Aorta (tissue), 5 donors: ENCODE measurements at regions of chr22 and their contacts with region 1.

Region 1: DNA sequence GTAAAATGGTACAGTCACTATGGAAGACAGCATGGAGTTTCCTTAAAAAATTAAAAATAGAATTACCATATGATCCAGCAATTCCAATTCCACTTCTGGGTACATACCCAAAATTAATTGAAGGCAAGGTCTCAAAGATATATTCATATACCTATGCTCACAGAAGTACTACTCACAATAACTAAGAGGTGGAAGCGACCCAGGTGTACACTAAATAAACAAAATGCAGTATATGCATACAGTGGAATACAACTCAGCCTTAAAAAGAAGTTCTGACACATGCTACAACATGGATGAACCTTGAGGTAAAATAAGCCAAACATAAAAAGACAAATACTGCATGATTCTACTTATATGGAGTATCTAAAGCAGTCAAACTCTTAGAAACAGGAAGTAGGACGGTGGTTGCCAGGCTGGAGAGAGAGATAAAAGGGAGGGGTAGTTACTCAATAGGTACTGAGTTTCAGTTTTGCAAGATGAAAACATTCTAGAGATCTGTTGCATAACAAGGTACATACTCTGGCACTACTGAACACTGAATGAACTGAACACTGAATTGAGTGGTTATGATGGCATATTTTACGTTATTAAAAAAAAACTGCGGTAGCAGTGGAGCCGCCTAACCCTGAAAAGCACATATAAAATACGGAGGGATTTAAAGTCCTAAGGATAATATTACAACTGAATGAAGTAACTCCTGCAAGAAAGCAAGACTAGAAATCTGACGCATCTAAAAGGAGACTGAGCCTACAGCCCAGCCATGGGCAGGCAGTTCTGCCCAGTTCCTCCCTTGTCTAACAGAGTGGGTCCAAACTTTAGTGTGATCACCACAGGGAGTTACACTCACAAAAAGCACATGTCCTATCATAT is 12.8 kb downstream of the DGCR2 start:
- DNase-seq: peak in 1 of 2 donors; percentile 26
- ATAC-seq: peak; percentile 50
- H3K4me3 ChIP-seq: no peak overlapping the region
- H3K27ac ChIP-seq: no peak overlapping the region
- H3K4me1 ChIP-seq: peaks cover 0 to under 1% of the 10 kb centered on the region in 2 donors
- H3K27me3 ChIP-seq: no peaks in the 10 kb centered on the region

Region 2: GRCh38 chr22:19058713-19059451 is 50.6 kb before region 1 on chr22:
- intact Hi-C with region 1: loop called in 1 of 2 experiments (anchors 10 kb)
- DNase-seq: no peak
- ATAC-seq: no peak
- H3K4me3 ChIP-seq: no peak overlapping the region
- H3K27ac ChIP-seq: no peak overlapping the region
- H3K4me1 ChIP-seq: no peaks in the 10 kb centered on the region
- H3K27me3 ChIP-seq: no peaks in the 10 kb centered on the region

Region 3: DNA sequence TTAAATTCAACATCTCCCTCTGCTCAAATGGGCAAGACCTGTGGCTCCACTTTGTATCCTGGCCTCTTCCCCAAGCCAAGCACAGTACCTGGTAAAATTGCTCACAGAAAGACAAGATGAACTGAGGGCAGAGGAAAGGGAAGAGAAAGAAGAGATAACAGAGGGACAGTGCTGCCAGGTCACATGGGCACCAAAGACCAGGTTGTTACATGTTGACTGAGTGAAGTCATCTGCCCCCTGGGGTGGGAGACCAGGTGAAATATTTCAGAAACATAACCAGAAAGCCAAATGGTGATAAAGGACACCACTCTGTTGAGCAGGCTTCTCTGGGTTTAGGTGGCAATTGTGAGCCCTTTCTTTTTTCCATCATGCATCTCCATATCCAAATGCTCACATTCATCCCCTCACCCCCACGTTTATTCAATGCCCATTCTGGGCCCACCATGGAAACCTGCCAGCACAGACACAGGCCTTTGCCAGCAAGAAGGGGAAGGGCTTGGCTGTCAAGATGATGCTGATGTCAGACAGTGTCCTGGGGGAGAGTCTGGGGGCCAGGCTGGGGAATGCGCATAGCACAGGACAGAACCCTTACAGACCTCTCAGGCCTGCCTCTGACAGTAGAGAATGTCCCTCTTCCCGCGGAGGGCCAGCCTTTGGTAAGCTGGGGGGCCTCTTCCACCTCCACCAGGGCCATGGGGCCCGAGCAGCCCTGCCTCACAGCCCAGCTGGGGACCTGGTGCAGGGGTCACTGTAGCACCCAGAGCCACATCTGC is 38.9 kb before region 1 on chr22:
- intact Hi-C with region 1: no loop called
- DNase-seq: no peak
- ATAC-seq: no peak
- H3K4me3 ChIP-seq: no peak overlapping the region
- H3K27ac ChIP-seq: no peak overlapping the region
- H3K4me1 ChIP-seq: no peaks in the 10 kb centered on the region
- H3K27me3 ChIP-seq: no peaks in the 10 kb centered on the region